Activated naive CD4-positive, alpha-beta T cell treated with anti-CD3 and anti-CD28 coated beads for 36 hours (primary cell): ENCODE measurements at regions of chr7 and their contacts with region 1.

Region 1: DNA sequence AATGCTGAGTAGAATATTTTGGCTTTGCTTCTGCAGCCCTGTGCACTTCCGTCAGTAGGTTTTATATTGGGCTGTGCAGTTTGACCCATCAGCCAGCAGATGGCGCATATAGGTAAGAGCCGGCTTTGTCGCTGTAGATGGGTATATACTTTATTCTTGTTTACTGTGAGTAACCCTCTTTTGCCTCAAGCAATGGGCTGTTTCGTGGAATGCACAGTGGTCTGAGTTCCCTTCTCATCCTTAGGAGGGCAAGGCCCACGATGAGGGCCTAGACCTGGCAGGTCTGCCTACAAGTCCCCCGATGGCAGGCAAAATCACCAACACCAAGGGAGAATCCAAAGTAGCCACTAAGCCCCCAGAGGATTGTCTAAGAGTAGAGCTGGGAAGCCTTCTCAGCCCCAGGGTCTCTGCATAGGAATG is 1002.9 kb upstream of the KCND2 start:
- DNase-seq: peak; percentile 38
- H3K4me3 Mint-ChIP-seq: no peak overlapping the region
- H3K27ac Mint-ChIP-seq: no peak overlapping the region
- H3K4me1 Mint-ChIP-seq: no peaks in the 10 kb centered on the region
- H3K27me3 Mint-ChIP-seq: no peaks in the 10 kb centered on the region

Region 2: DNA sequence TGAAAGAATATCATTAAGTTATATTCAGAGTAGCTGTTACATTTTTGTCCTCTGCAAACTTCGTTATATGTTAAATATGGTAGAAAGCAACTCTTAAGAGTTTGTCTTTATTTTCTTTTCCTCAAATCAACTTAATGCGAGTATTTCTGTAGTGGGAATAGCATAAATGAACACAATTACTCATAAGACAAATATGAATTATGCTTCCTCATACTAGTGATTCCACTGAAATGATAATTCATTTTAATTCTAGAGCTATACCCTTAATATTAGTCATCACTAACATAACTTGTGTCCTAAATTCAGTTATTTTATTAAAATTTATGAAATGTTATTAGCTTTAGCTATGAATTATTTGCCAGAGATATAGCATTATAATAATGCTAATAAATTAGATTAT is 182.3 kb after region 1 on chr7:
- CTCF ChIA-PET with region 1: no interaction called
- intact Hi-C with region 1: no loop called
- DNase-seq: no peak
- H3K4me3 Mint-ChIP-seq: no peak overlapping the region
- H3K27ac Mint-ChIP-seq: no peak overlapping the region
- H3K4me1 Mint-ChIP-seq: no peaks in the 10 kb centered on the region
- H3K27me3 Mint-ChIP-seq: no peaks in the 10 kb centered on the region

Region 3: GRCh38 chr7:120272261-120272660 is 1002.2 kb after region 1 on chr7:
- CTCF ChIA-PET with region 1: no interaction called
- intact Hi-C with region 1: loop called (anchors 1 kb)
- DNase-seq: no peak
- H3K4me3 Mint-ChIP-seq: no peak overlapping the region
- H3K27ac Mint-ChIP-seq: no peak overlapping the region
- H3K4me1 Mint-ChIP-seq: peaks cover 10% of the 10 kb centered on the region
- H3K27me3 Mint-ChIP-seq: peaks cover 40% of the 10 kb centered on the region

Region 4: GRCh38 chr7:120725376-120726039 is 1455.5 kb after region 1 on chr7:
- CTCF ChIA-PET with region 1: no interaction called
- intact Hi-C with region 1: loop called (anchors 1 kb)
- DNase-seq: no peak
- H3K4me3 Mint-ChIP-seq: no peak overlapping the region
- H3K27ac Mint-ChIP-seq: no peak overlapping the region
- H3K4me1 Mint-ChIP-seq: no peaks in the 10 kb centered on the region
- H3K27me3 Mint-ChIP-seq: peaks cover 5% of the 10 kb centered on the region